Activated CD8-positive, alpha-beta T cell treated with anti-CD3 and anti-CD28 coated beads for 36 hours (primary cell): ENCODE measurements at regions of chr3 and their contacts with region 1.

Region 1: GRCh38 chr3:89344076-89344475 is 236.7 kb downstream of the EPHA3 start:
- DNase-seq: no peak
- ATAC-seq: no peak
- H3K4me3 Mint-ChIP-seq: no peak overlapping the region
- H3K27ac Mint-ChIP-seq: no peak overlapping the region
- H3K4me1 Mint-ChIP-seq: no peaks in the 10 kb centered on the region
- H3K27me3 Mint-ChIP-seq: no peaks in the 10 kb centered on the region
- CTCF ChIP-seq: no peak

Region 2: DNA sequence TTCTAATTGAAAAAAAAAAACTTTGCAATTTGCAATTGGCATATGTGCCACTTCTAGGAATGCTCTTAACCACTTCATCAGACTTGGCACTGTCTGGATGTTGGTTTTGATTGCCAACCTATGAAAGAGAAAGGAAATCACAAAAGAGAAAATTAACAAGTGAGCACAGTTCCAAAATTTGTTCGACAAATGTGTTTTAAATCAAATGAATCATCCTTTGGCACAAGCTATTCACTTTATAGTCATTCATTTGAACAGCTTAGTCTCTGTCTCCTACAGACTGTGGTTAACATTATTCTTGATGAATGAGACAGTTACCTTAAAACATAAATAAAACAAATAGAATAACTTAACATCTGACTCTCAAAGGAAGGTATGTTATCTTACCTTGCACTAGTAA is 28.4 kb after region 1 on chr3:
- CTCF ChIA-PET with region 1: no interaction called
- POLR2A ChIA-PET with region 1: no interaction called
- intact Hi-C with region 1: loop called (anchors 2 kb)
- DNase-seq: no peak
- ATAC-seq: no peak
- H3K4me3 Mint-ChIP-seq: no peak overlapping the region
- H3K27ac Mint-ChIP-seq: no peak overlapping the region
- H3K4me1 Mint-ChIP-seq: no peaks in the 10 kb centered on the region
- H3K27me3 Mint-ChIP-seq: no peaks in the 10 kb centered on the region
- CTCF ChIP-seq: no peak